IMR-90 (cell line): ENCODE measurements at regions of chr1 and their contacts with region 1.

Region 1: GRCh38 chr1:203565049-203565448 is 61.6 kb upstream of the ATP2B4 start:
- DNase-seq: no peak
- ATAC-seq: no peak
- H3K4me3 ChIP-seq: no peak overlapping the region
- H3K27ac ChIP-seq: no peak overlapping the region
- H3K4me1 ChIP-seq: peaks cover 14% of the 10 kb centered on the region
- H3K27me3 ChIP-seq: no peaks in the 10 kb centered on the region
- CTCF ChIP-seq: no peak
- POLR2A ChIP-seq: no peak
- RAD21 ChIP-seq: no peak

Region 2: GRCh38 chr1:201828820-201829774 is 1736.0 kb before region 1 on chr1 and contains the start of gene IPO9:
- CTCF ChIA-PET with region 1: no interaction called
- POLR2A ChIA-PET with region 1: interaction called, 11 read pairs
- dilution Hi-C with region 1: no loop called
- in situ Hi-C with region 1: no loop called
- intact Hi-C with region 1: no loop called
- DNase-seq: peak; percentile 91
- ATAC-seq: peak; percentile 88
- H3K4me3 ChIP-seq: peak within 1 kb of the TSS; percentile 95
- H3K27ac ChIP-seq: peak within 1 kb of the TSS; percentile 100
- H3K4me1 ChIP-seq: peaks cover 3% of the 10 kb centered on the region
- H3K27me3 ChIP-seq: no peaks in the 10 kb centered on the region
- CTCF ChIP-seq: peak; percentile 96
- POLR2A ChIP-seq: peak; percentile 87
- RAD21 ChIP-seq: peak; percentile 52
- total RNA-seq, gene IPO9: 13.9 and 14.0 TPM in 2 replicates